Adrenal gland (tissue), 19 donors: ENCODE measurements at regions of chr16 and their contacts with region 1.

Region 1: DNA sequence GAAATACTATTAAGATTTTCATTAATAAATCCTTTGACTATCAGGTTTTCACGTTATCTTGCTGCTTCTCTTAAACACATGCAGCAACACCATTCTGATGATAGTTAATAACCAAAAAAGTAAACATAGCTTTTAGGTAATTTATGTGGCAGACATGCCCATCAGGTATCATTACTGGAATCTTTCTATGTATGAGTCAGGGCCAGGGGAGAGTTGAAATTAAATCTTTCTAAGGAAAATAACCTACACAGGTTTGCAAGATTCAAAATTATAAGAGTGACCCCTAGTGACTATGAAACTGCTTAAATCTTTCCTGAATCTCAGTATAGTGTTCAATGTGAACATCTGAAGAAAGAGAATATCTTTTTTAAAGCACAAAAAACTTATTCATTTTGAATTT is 666.6 kb downstream of the CDH11 start:
- DNase-seq: no peak
- H3K4me3 ChIP-seq: no peak overlapping the region
- H3K27ac ChIP-seq: no peak overlapping the region
- H3K4me1 ChIP-seq: no peaks in the 10 kb centered on the region
- H3K27me3 ChIP-seq: no peaks in the 10 kb centered on the region
- CTCF ChIP-seq: peak in 5 of 6 experiments; percentile 17 to 39 (median 24)
- POLR2A ChIP-seq: no peak

Region 2: GRCh38 chr16:64089697-64090096 is 365.6 kb before region 1 on chr16:
- intact Hi-C with region 1: loop called in 1 of 2 experiments (anchors 10 kb)
- DNase-seq: no peak
- H3K4me3 ChIP-seq: no peak overlapping the region
- H3K27ac ChIP-seq: no peak overlapping the region
- H3K4me1 ChIP-seq: no peaks in the 10 kb centered on the region
- H3K27me3 ChIP-seq: no peaks in the 10 kb centered on the region
- CTCF ChIP-seq: peak; percentile 4 to 57 (median 43)
- POLR2A ChIP-seq: no peak

Region 3: DNA sequence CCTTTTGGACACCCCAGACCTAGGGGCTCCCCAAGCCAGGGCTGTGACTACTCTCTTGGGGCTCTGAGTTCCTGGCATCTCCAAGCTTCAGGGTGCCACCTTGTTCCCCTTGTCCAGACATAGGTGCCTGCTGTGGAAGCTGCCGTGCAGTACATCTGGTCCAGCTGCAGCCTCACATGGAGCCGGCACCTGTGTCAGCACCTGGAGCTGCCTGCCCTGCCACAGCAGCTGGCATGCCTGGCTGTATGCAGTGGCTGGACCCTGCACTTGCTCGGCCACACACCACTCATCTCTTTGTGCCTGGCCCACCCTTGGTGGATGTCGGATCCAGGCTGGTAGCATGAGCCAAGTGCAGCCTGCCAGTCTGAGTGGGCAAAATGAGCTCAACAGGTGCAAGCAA is 109.2 kb before region 1 on chr16:
- intact Hi-C with region 1: no loop called
- DNase-seq: no peak
- H3K4me3 ChIP-seq: no peak overlapping the region
- H3K27ac ChIP-seq: no peak overlapping the region
- H3K4me1 ChIP-seq: no peaks in the 10 kb centered on the region
- H3K27me3 ChIP-seq: no peaks in the 10 kb centered on the region
- CTCF ChIP-seq: no peak
- POLR2A ChIP-seq: no peak